SK-N-SH (cell line): ENCODE measurements at regions of chr12 and their contacts with region 1.

Region 1: GRCh38 chr12:112855375-112855774 is 51.4 kb upstream of the OAS1 start:
- DNase-seq: peak; percentile 61
- H3K4me3 ChIP-seq: no peak overlapping the region
- H3K27ac ChIP-seq: peak overlapping the region in 1 of 2 experiments; percentile 62; a peak in 2 of 4 replicates
- H3K4me1 ChIP-seq: peaks cover 0 to 30% of the 10 kb centered on the region in 2 experiments; a peak in 1 of 4 replicates
- H3K27me3 ChIP-seq: no peaks in the 10 kb centered on the region
- CTCF ChIP-seq: peak; percentile 37
- EP300 ChIP-seq: peak in 1 of 2 experiments; percentile 63; a peak in 2 of 4 replicates
- RAD21 ChIP-seq: peak; percentile 58

Region 2: GRCh38 chr12:112868459-112869041 is 13.2 kb after region 1 on chr12:
- CTCF ChIA-PET with region 1: interaction called, 13 read pairs
- POLR2A ChIA-PET with region 1: no interaction called
- DNase-seq: no peak
- H3K4me3 ChIP-seq: no peak overlapping the region
- H3K27ac ChIP-seq: peak overlapping the region in 1 of 2 experiments; percentile 81; a peak in 2 of 4 replicates
- H3K4me1 ChIP-seq: peaks cover 0 to 7% of the 10 kb centered on the region in 2 experiments; a peak in 2 of 4 replicates
- H3K27me3 ChIP-seq: no peaks in the 10 kb centered on the region
- CTCF ChIP-seq: no peak
- EP300 ChIP-seq: no peak
- RAD21 ChIP-seq: no peak

Region 3: DNA sequence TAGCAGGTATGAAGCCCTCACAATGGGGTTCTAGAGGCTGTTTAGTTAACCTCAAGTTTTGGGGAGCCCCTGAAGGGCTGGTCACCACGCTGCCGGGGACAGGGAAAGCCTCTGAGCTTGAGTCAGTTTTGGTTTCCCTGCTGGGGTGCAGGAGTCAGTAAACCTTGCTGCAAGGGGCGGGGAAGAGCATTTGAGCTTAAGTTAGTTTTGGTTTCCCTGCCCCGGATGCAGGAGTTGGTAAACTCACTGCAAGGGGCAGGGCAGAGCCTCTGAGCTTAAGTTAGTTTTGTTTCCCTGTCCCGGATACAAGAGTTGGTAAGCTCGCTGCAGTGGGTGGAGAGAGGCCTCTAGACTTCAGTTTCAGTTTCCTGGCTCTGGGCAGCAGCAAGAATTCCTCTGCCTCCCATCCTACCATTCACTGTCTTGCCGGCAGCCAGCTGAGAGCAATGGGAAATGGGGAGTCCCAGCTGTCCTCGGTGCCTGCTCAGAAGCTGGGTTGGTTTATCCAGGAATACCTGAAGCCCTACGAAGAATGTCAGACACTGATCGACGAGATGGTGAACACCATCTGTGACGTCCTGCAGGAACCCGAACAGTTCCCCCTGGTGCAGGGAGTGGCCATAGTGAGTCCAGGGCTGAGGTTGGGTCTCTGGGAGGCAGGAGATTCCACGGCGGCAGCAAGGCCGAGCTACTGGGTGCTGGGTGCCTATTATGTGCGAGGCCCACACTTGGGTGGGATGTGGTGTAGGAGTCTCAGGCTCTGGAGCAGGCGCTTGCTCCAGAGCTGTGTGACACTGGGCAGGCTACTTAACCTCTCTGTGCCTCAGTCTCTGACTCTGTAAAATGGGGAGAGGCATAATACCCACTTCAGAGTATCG is 123.0 kb after region 1 on chr12 and contains the start of gene OAS2:
- CTCF ChIA-PET with region 1: no interaction called
- POLR2A ChIA-PET with region 1: no interaction called
- DNase-seq: no peak
- H3K4me3 ChIP-seq: no peak within 1 kb of the TSS
- H3K27ac ChIP-seq: no peak within 1 kb of the TSS
- H3K4me1 ChIP-seq: peaks cover 0 to 6% of the 10 kb centered on the region in 2 experiments; a peak in 1 of 4 replicates
- H3K27me3 ChIP-seq: no peaks in the 10 kb centered on the region
- CTCF ChIP-seq: no peak
- EP300 ChIP-seq: no peak
- RAD21 ChIP-seq: no peak
- polyA plus RNA-seq, gene OAS2: 0.02 TPM in 1 of 2 replicates, not detected in the other